Activated B cell treated with CpG ODN at 0.5 μM for 24 hours (primary cell): ENCODE measurements at regions of chr10 and their contacts with region 1.

Region 1: DNA sequence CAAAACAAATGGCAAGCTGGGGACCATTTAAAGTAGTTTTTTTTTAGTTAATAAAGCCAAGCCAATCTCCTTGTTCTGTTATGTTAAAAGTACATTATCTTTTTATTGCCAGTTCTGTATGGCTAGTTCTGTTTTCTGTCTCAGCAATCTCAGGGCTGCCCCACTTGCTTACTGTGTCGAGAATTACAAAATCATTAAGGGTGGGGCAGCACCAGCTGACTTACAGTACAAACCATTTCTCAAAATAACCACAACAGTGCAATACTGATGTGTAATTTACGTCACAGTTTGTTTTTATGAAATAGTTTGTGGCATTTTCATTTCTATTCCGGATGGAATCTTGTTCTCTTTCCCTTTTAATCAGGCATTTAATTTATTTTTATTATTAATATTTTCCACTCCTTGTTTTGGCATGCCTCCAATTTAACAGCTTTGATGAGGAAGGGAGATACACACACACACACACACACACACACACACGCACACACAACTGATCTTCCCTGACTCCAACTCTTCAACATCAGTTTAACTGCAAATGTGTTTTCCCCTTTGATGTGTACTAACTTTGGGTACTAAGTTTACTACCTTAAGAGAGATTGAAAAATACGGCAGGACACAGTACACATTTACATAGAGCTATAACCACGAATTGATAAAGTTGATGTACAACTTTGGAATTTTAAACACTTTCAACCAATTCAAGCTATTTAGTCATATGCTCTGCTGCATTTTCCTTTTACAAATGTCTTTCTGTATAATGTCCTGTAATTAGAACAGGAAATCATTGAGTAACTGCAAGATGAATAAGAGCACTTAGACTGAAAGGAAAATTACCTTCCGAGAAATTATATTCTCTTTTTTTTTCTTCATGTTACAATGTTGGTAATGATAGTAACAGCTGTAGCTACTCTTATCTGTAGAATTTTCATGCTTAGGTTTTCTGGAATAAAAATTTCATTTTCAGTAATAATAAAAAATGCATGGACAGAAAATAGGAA is 91.5 kb downstream of the ARID5B start:
- DNase-seq: no peak
- ATAC-seq: peak; percentile 59
- H3K4me3 Mint-ChIP-seq: peak overlapping the region; percentile 62
- H3K27ac Mint-ChIP-seq: peak overlapping the region; percentile 89
- H3K4me1 Mint-ChIP-seq: peaks cover 90% of the 10 kb centered on the region
- H3K27me3 Mint-ChIP-seq: no peaks in the 10 kb centered on the region
- CTCF ChIP-seq: no peak

Region 2: GRCh38 chr10:61541960-61542359 is 451.0 kb before region 1 on chr10:
- CTCF ChIA-PET with region 1: no interaction called
- POLR2A ChIA-PET with region 1: no interaction called
- intact Hi-C with region 1: no loop called
- DNase-seq: no peak
- ATAC-seq: no peak
- H3K4me3 Mint-ChIP-seq: no peak overlapping the region
- H3K27ac Mint-ChIP-seq: no peak overlapping the region
- H3K4me1 Mint-ChIP-seq: no peaks in the 10 kb centered on the region
- H3K27me3 Mint-ChIP-seq: peaks cover 6% of the 10 kb centered on the region
- CTCF ChIP-seq: no peak

Region 3: DNA sequence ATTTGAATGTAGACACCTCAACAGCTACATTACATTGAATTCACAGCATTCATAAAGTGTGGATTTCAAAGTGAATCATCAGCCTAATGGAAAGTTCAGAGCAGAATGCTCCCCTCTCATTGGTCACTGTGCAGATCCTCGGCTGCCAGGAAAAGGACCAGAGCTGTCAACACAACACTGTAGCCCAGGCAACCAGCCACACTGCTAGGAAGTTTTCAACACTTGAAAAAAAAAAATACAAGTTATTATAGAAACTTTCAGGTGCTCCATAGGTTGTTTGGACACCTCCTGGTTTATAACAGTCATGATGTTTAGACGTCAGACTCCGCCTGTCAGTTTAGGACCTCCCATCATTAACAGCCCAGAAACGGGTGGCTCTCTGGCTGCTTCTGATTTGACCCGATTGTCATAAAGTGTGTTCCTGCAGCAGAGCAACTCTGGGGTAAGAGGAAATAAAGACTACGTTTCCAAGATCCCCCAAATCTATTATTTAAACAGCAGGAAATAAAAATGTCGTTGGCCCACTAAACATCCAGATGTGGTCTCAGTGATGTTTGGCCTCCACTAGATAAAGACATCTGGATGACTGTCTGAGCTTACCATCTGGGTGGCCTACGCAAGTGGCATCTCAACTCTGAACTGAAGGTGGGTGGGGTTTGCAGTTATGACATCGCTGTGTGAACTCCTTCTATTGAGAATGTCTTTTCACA is 212.9 kb before region 1 on chr10:
- CTCF ChIA-PET with region 1: no interaction called
- POLR2A ChIA-PET with region 1: no interaction called
- intact Hi-C with region 1: no loop called
- DNase-seq: no peak
- ATAC-seq: no peak
- H3K4me3 Mint-ChIP-seq: no peak overlapping the region
- H3K27ac Mint-ChIP-seq: no peak overlapping the region
- H3K4me1 Mint-ChIP-seq: no peaks in the 10 kb centered on the region
- H3K27me3 Mint-ChIP-seq: no peaks in the 10 kb centered on the region
- CTCF ChIP-seq: no peak

Region 4: GRCh38 chr10:61882621-61883373 is 110.2 kb before region 1 on chr10:
- CTCF ChIA-PET with region 1: no interaction called
- POLR2A ChIA-PET with region 1: no interaction called
- intact Hi-C with region 1: no loop called
- DNase-seq: no peak
- ATAC-seq: no peak
- H3K4me3 Mint-ChIP-seq: no peak overlapping the region
- H3K27ac Mint-ChIP-seq: no peak overlapping the region
- H3K4me1 Mint-ChIP-seq: peaks cover 23% of the 10 kb centered on the region
- H3K27me3 Mint-ChIP-seq: no peaks in the 10 kb centered on the region
- CTCF ChIP-seq: no peak

Region 5: DNA sequence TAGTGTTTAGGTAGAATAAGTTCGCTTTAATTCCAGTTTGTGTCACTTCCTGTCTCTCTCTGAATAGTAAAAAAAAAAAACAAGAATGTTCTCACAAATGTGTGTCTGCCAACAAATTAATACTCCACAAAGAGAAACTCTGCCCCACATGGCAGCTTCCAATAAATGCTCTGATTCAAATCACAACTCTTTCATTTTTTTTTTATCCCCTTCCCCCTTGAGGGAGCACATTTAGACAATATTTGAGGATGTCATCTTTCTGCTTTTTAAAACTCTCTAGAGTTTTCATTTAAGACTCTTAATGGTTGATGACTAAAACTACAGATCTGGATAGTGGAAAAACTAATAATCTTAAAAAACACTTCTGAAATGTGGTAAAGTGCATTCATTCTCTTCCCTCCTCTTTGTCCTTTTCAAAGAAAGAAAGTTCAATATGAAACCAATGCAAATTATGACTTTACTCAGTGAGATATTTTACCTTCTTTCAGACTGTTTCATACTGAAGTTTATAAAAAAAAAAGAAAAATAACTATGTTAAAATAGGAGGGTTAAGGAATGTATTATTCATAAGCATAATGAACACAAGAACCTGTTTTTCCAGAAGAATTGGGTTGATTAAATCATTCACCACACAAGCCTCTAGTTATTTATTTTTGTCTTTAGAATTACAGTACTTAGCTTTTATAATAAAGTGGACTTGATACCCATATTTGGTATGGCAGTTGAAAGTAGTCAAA is 49.1 kb before region 1 on chr10:
- CTCF ChIA-PET with region 1: interaction called, 4 read pairs
- POLR2A ChIA-PET with region 1: interaction called, 46 read pairs
- intact Hi-C with region 1: loop called (anchors 1 kb)
- DNase-seq: no peak
- ATAC-seq: peak; percentile 65
- H3K4me3 Mint-ChIP-seq: peak overlapping the region; percentile 44
- H3K27ac Mint-ChIP-seq: peak overlapping the region; percentile 91
- H3K4me1 Mint-ChIP-seq: peaks cover 66% of the 10 kb centered on the region
- H3K27me3 Mint-ChIP-seq: no peaks in the 10 kb centered on the region
- CTCF ChIP-seq: no peak

Region 6: GRCh38 chr10:61974601-61975390 is 18.2 kb before region 1 on chr10:
- CTCF ChIA-PET with region 1: interaction called, 3 read pairs
- POLR2A ChIA-PET with region 1: interaction called, 53 read pairs
- intact Hi-C with region 1: no loop called
- DNase-seq: no peak
- ATAC-seq: no peak
- H3K4me3 Mint-ChIP-seq: peak overlapping the region; percentile 60
- H3K27ac Mint-ChIP-seq: peak overlapping the region; percentile 81
- H3K4me1 Mint-ChIP-seq: peaks cover 84% of the 10 kb centered on the region
- H3K27me3 Mint-ChIP-seq: no peaks in the 10 kb centered on the region
- CTCF ChIP-seq: no peak

Region 7: GRCh38 chr10:62011558-62011957 is 18.6 kb after region 1 on chr10:
- CTCF ChIA-PET with region 1: interaction called, 4 read pairs
- POLR2A ChIA-PET with region 1: interaction called, 168 read pairs
- intact Hi-C with region 1: loop called (anchors 1 kb)
- DNase-seq: no peak
- ATAC-seq: peak; percentile 59
- H3K4me3 Mint-ChIP-seq: no peak overlapping the region
- H3K27ac Mint-ChIP-seq: peak overlapping the region; percentile 87
- H3K4me1 Mint-ChIP-seq: peaks cover 84% of the 10 kb centered on the region
- H3K27me3 Mint-ChIP-seq: no peaks in the 10 kb centered on the region
- CTCF ChIP-seq: no peak